HepG2 (cell line): ENCODE measurements at regions of chr19 and their contacts with region 1.

Region 1: DNA sequence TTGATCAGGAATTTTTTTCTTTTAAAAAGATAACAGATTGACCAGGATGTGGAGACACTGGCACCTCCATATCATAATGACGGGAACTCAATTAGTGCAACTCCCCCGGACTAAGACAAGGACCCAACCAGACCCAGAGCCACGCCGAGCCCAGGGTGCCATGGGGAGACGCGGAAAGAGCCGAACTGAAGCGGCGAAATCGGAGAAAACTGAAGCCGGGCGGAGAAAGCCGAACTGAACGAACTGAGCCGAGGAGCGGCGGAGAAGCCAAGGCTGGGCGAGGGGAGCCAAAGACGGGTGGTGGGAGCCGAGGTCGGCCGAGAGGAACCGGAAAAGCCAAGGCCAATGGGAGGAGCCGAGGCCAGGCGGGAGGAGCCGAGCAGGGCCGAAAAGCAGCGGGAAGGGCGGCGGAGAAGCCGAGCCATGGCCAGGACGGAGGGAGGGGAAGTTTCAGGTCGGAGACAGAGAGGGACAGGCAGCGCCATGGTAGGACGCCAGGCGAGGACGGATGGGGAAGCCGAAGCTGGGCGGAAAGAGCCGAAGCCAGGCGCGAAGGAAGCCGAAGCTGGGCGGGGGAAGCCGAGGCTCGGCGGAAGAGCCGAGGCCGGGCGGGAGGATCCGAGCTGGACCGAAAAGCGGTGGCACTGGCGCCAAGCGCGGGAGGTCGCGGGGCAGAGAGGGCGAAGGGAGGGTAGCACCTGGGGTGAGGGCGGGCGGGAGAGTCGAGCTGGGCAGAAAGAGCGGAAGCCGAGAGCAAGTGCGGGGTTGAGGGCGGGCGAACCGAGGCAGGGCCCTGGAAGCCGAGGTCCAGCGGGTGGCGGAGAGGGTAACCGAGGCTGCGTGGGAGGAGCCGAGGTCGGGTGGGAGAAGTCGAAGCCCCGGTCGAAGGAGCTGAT is 29.4 kb downstream of the ZNF557 start:
- DNase-seq: peak; percentile 80
- ATAC-seq: peak; percentile 95
- H3K4me3 ChIP-seq: peak overlapping the region; percentile 66 to 83 (median 77)
- H3K27ac ChIP-seq: peak overlapping the region; percentile 82
- H3K4me1 ChIP-seq: peaks cover 37% of the 10 kb centered on the region
- H3K27me3 ChIP-seq: no peaks in the 10 kb centered on the region
- CTCF ChIP-seq: peak; percentile 27; the same call in 1 of the 2 replicates
- EP300 ChIP-seq: no peak
- POLR2A ChIP-seq: peak; percentile 65 to 71
- RAD21 ChIP-seq: no peak

Region 2: GRCh38 chr19:6963937-6964336 is 135.0 kb before region 1 on chr19:
- CTCF ChIA-PET with region 1: no interaction called
- POLR2A ChIA-PET with region 1: no interaction called
- in situ Hi-C with region 1: no loop called
- intact Hi-C with region 1: no loop called
- DNase-seq: no peak
- ATAC-seq: no peak
- H3K4me3 ChIP-seq: no peak overlapping the region
- H3K27ac ChIP-seq: no peak overlapping the region
- H3K4me1 ChIP-seq: no peaks in the 10 kb centered on the region
- H3K27me3 ChIP-seq: 0 out of 5 replicates have a peak, but pooled peaks cover 0 to 5% of the 10 kb centered on the region in 2 experiments
- CTCF ChIP-seq: peak; percentile 38; the same call in 1 of the 2 replicates
- EP300 ChIP-seq: no peak
- POLR2A ChIP-seq: no peak
- RAD21 ChIP-seq: no peak

Region 3: DNA sequence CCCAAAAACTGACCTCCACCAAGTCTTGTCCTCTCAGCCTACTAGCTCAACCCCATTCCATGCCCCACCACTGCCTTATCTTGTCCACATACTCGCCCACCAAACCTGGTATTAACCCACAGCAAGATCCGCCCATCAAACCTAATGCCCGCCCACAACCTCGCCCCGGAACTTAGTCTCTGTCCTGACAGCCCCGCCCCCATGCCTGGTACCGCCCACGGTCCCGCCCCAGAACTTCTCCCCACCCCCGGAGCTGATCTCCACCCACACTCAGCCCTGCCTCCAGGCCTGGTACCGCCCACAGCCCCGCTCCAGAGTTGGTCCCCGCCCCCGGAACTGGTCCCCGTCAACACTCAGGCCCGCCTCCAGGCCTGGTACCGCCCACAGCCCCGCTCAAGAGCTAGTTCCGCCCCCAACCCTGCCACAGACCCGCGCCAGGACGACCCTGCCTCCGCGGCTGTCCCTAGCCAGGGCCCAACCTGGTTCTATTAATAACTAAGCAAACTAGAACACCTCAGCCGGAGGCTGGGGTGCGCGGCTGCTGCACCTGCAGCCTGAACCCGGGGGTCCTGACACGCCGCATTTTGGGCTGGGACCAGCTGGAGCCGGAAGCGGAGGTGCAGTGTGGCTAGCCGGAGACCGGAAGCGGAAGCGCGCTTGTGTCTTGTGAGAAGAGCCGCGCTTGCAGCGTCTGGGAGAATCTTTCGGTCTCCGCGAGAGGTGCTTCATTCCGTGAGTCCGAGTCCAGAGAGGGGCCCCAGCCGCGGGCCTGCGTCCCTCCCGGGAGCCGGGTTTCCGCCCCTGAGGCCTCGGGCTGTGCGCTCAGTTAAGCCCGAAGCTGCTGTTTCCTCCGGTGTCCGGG is 29.7 kb before region 1 on chr19 and contains the start of gene ZNF557:
- CTCF ChIA-PET with region 1: no interaction called
- POLR2A ChIA-PET with region 1: interaction called, 32 read pairs
- in situ Hi-C with region 1: no loop called
- intact Hi-C with region 1: no loop called
- DNase-seq: peak; percentile 88
- ATAC-seq: peak; percentile 99
- H3K4me3 ChIP-seq: peak within 1 kb of the TSS; percentile 77 to 94 (median 90)
- H3K27ac ChIP-seq: peak within 1 kb of the TSS; percentile 77
- H3K4me1 ChIP-seq: peaks cover 14% of the 10 kb centered on the region
- H3K27me3 ChIP-seq: no peaks in the 10 kb centered on the region; a peak in 1 of 5 replicates
- CTCF ChIP-seq: no peak
- EP300 ChIP-seq: no peak
- POLR2A ChIP-seq: peak; percentile 64 to 87
- RAD21 ChIP-seq: no peak
- total RNA-seq, gene ZNF557: 7.8 and 10.0 TPM in 2 replicates